Endothelial cell of umbilical vein (primary cell): ENCODE measurements at regions of chr2 and their contacts with region 1.

Region 1: GRCh38 chr2:197705121-197705911 is at the start of gene MARS2:
- DNase-seq: peak; percentile 93
- H3K4me3 ChIP-seq: peak within 1 kb of the TSS; percentile 54 to 85 (median 81)
- H3K27ac ChIP-seq: peak within 1 kb of the TSS; percentile 34
- H3K4me1 ChIP-seq: peaks cover 22% of the 10 kb centered on the region
- H3K27me3 ChIP-seq: peaks cover 0 to 3% of the 10 kb centered on the region in 2 experiments
- CTCF ChIP-seq: no peak
- POLR2A ChIP-seq: peak; percentile 95
- total RNA-seq, gene MARS2: 5.1 and 5.3 TPM in 2 replicates

Region 2: GRCh38 chr2:197434541-197435513 is 270.5 kb before region 1 on chr2 and contains the start of gene SF3B1:
- CTCF ChIA-PET with region 1: no interaction called
- POLR2A ChIA-PET with region 1: no interaction called
- dilution Hi-C with region 1: no loop called
- intact Hi-C with region 1: loop called (anchors 1 kb)
- DNase-seq: peak; percentile 99
- H3K4me3 ChIP-seq: peak within 1 kb of the TSS; percentile 67 to 100 (median 99)
- H3K27ac ChIP-seq: peak within 1 kb of the TSS; percentile 96
- H3K4me1 ChIP-seq: peaks cover 19% of the 10 kb centered on the region
- H3K27me3 ChIP-seq: no peaks in the 10 kb centered on the region
- CTCF ChIP-seq: peak in 1 of 2 donors; percentile 3
- POLR2A ChIP-seq: peak; percentile 95
- total RNA-seq, gene SF3B1: 222 and 234 TPM in 2 replicates

Region 3: DNA sequence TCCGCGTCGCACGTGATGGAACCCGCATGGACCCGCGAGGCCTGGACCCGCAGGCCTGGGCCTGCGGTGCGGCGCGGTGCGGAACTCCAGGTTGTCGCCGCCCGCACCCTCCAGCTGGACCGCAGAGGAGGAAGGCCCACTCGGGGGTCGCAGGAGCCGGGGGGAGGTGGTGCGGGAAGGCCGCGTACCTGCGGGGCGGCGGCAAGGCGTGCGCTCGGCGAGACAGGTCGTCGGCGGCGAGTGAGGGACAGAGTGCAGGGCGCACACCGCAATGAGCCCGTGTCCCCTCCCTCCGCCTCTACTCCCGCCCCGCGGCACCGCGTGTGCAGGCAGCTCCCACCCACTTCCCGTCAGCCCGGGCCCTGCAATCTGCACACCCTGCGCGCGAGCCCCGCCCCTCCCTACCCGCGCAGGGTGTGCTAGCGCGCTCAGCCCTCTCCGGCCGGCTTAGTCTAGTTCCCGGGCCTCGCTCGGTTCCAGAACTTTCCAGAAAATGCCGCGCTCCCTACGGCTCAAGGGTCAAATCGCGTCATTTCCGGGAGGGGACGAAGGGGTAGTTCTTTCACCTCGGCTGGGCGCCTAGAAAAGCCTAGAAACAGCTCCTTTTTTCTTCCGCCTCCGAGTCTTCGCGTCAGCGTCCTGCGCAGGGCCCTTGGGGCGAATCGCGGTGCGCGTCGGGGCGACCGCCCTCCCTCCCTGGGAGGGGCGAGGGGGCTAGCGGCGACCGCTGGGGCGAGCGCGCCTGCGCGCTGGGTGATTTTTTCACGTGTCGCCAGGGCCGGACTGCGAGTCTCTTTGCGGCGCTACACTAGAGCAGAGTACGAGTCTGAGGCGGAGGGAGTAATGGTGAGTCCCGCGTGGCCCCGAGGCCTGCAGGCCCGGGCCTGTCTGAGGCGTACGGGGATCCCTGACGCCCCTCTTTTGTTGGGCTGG is 205.5 kb before region 1 on chr2 and contains the starts of genes HSPD1 and HSPE1:
- CTCF ChIA-PET with region 1: no interaction called
- POLR2A ChIA-PET with region 1: no interaction called
- dilution Hi-C with region 1: no loop called
- intact Hi-C with region 1: loop called (anchors 1 kb)
- DNase-seq: peak; percentile 99
- H3K4me3 ChIP-seq: peak within 1 kb of the TSS; percentile 68 to 93 (median 86)
- H3K27ac ChIP-seq: peak within 1 kb of the TSS; percentile 75
- H3K4me1 ChIP-seq: peaks cover 46% of the 10 kb centered on the region
- H3K27me3 ChIP-seq: no peaks in the 10 kb centered on the region
- CTCF ChIP-seq: no peak
- POLR2A ChIP-seq: peak; percentile 82
- total RNA-seq, gene HSPD1: 307 and 337 TPM in 2 replicates
- total RNA-seq, gene HSPE1: 137 and 145 TPM in 2 replicates

Region 4: DNA sequence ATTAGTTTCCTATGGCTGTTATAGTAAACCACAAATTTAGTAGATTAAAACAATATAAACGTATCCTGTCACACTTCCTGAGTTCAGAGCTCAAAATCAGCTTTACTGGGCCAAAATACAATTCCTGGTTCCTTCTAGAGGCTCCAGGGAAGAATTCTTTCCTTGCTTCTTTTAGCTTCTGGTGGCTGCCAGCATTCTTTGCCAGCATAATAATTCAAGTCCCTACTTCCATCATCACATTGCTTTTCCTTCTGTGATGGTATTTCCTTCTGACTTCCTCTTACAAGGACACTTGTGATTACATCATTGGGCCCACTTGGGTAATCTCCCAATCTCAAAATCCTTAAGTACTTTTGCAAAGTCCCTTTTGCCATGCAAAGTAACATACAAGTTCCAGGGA is 148.9 kb before region 1 on chr2:
- CTCF ChIA-PET with region 1: no interaction called
- POLR2A ChIA-PET with region 1: no interaction called
- dilution Hi-C with region 1: no loop called
- intact Hi-C with region 1: loop called (anchors 1 kb)
- DNase-seq: peak; percentile 82
- H3K4me3 ChIP-seq: no peak overlapping the region
- H3K27ac ChIP-seq: peak overlapping the region; percentile 7
- H3K4me1 ChIP-seq: peaks cover 16% of the 10 kb centered on the region
- H3K27me3 ChIP-seq: no peaks in the 10 kb centered on the region
- CTCF ChIP-seq: no peak
- POLR2A ChIP-seq: no peak

Region 5: DNA sequence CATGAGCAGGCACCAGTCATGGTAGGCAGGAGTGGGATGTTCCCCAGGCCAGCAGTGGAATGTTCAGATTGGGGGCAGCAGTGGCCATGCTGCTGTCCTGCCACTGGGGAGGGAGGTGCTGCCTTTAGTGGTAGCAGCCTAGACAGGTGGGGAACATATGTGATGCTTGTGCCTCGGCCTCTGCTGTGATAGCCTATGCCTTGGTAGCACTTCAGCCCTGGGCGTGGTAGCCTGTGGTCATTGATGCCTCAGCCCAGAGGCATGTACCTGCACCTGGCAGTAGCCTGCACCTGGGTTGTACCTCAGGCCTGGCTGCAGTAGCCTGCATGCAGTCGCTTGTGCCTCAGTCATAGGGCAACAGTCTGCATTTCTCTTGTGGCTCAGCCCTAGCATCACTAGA is 37.0 kb before region 1 on chr2:
- CTCF ChIA-PET with region 1: no interaction called
- POLR2A ChIA-PET with region 1: no interaction called
- dilution Hi-C with region 1: no loop called
- intact Hi-C with region 1: no loop called
- DNase-seq: no peak
- H3K4me3 ChIP-seq: no peak overlapping the region
- H3K27ac ChIP-seq: no peak overlapping the region
- H3K4me1 ChIP-seq: peaks cover 5% of the 10 kb centered on the region
- H3K27me3 ChIP-seq: no peaks in the 10 kb centered on the region
- CTCF ChIP-seq: no peak
- POLR2A ChIP-seq: no peak

Region 6: GRCh38 chr2:197777823-197778407 is 72.6 kb after region 1 on chr2:
- CTCF ChIA-PET with region 1: interaction called, 12 read pairs
- POLR2A ChIA-PET with region 1: no interaction called
- dilution Hi-C with region 1: no loop called
- intact Hi-C with region 1: loop called (anchors 1 kb)
- DNase-seq: peak; percentile 58
- H3K4me3 ChIP-seq: no peak overlapping the region
- H3K27ac ChIP-seq: no peak overlapping the region
- H3K4me1 ChIP-seq: no peaks in the 10 kb centered on the region
- H3K27me3 ChIP-seq: no peaks in the 10 kb centered on the region
- CTCF ChIP-seq: peak; percentile 28 to 32
- POLR2A ChIP-seq: no peak